Mucosa of descending colon (tissue), 3 donors: ENCODE measurements at regions of chr11 and their contacts with region 1.

Region 1: GRCh38 chr11:75388386-75389275 is 10.7 kb upstream of the RPS3 start:
- DNase-seq: peak; percentile 76 to 84 (median 83)
- ATAC-seq: peak; percentile 62
- H3K4me3 ChIP-seq: no peak overlapping the region
- H3K4me1 ChIP-seq: peaks cover 30% of the 10 kb centered on the region
- CTCF ChIP-seq: peak; percentile 73

Region 2: DNA sequence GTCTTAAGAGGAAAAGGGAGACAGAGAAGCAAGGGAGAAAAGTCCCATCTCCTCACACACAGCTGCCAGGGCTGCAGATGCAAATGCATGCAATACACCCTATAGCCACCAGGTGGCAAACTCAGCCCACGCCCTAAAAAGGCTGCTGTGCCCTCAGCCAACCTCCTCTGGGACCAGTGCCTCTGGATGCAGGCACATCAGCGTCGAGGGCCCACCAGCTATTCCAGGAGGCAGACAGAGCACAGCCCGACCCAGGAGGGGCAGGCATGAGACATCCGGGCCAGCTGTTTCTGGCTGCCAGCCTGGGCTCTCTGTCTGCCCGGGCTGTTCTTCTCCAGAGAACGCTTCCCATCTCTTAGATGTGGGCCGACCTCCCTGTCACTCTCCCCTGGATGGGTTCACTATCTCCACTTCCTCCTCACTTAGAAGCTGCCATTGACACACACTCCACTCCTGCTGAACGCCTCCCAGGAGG is 108.4 kb before region 1 on chr11:
- intact Hi-C with region 1: loop called (anchors 5 kb)
- DNase-seq: peak; percentile 76 to 88 (median 80)
- ATAC-seq: peak; percentile 92
- H3K4me3 ChIP-seq: no peak overlapping the region
- H3K4me1 ChIP-seq: peaks cover 5% of the 10 kb centered on the region
- CTCF ChIP-seq: peak; percentile 91

Region 3: DNA sequence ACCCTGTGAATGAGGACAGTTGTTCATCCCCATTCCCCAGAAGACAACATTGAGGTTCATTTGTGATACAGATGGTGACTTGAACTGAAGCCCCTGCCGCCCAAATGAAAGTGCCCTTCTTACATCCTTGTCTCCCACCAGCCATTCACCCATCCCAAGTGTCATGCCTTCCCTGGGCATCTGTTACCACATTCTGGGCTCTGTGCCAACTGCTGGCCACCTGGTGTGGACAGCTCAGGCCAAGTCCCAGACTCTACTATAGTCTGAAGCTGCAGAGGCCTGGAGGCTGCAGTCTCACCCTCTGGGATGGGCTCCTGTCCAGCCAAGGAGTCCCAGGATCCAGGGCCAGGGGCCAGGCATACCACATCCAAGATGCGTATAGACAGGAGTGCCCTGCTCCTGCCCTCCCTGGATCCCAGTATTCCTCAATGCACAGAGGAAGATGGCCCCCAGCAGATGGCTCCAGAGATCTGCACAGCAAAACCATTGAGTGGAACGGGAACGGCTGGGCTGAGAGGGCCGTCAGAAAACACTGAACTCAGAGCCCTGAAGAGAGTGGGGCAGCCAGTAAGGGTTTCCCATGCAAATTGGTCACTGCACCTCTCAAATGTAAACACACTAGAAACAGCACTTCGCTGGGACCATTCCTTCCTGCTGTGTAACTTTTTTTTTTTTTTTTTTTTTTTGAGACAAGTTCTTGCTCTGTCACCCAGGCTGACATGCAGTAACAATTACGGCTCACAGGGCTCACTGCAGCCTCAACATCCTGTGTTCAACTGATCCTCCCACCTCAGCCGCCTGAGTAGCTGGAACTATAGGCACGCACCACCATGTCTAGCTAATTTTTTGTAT is 60.0 kb before region 1 on chr11:
- intact Hi-C with region 1: loop called (anchors 5 to 10 kb)
- DNase-seq: peak; percentile 77 to 90 (median 86)
- ATAC-seq: peak; percentile 79
- H3K4me3 ChIP-seq: no peak overlapping the region
- H3K4me1 ChIP-seq: peaks cover 52% of the 10 kb centered on the region
- CTCF ChIP-seq: peak; percentile 30